ENCODE measurements at regions of chr1 and their contacts with region 1.

Region 1: GRCh38 chr1:116570358-116571200 is at the start of gene CD58:
- DNase-seq: peak; percentile 93
- H3K4me3 ChIP-seq: peak within 1 kb of the TSS; percentile 73 to 95 (median 79)
- H3K27ac ChIP-seq: peak within 1 kb of the TSS; percentile 95 to 99 (median 96)
- H3K4me1 ChIP-seq: peaks cover 0 to 32% (median 21%) of the 10 kb centered on the region in 4 donors
- H3K27me3 ChIP-seq: no peaks in the 10 kb centered on the region
- CTCF ChIP-seq: peak in 3 of 4 experiments; percentile 50 to 71 (median 53)
- EP300 ChIP-seq: no peak
- POLR2A ChIP-seq: peak; percentile 26 to 58
- total RNA-seq, gene CD58: 17.5 to 36.6 (median 28.0) TPM

Region 2: GRCh38 chr1:116377541-116378529 is 192.7 kb before region 1 on chr1:
- intact Hi-C with region 1: loop called (anchors 5 kb)
- DNase-seq: peak; percentile 90
- H3K4me3 ChIP-seq: peak overlapping the region in 3 of 4 donors; percentile 2 to 17 (median 13)
- H3K27ac ChIP-seq: peak overlapping the region; percentile 80 to 98 (median 95)
- H3K4me1 ChIP-seq: peaks cover 0 to 80% (median 66%) of the 10 kb centered on the region in 4 donors
- H3K27me3 ChIP-seq: no peaks in the 10 kb centered on the region
- CTCF ChIP-seq: no peak
- EP300 ChIP-seq: peak in 1 of 4 donors; percentile 29
- POLR2A ChIP-seq: no peak

Region 3: DNA sequence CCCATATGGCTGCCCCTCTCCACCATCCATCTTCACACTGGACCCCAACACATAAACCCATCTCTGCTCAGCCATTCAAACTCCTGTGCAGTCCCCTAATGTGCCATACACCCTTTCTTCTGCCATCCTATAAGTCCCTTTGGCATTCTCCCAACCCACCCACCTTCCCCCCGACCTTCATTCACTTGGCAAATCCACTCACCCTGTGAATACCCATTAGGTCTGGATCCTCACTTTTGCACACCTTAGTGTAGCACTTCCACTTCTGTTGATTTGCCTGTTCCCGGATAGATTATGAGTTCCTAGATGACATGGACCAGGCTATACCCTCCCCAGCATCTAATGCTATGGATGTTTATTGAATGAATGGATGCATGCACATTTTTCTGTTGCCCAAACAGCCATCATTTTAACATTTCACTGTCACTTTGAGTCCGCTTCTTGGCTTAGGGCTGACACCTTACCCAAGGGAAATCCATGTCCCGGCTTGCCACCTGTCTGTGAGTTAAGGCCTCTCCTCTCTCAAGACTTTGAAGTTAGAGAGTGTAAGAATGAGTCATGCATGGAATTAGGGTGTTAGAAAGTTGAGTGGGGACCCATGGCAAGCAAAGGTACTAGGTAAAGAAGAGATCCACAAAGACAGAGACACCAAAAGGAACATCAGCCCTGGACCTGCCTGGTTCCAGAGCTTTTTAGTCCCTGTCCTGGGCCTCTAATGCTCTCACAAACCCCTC is 162.6 kb before region 1 on chr1:
- intact Hi-C with region 1: no loop called
- DNase-seq: no peak
- H3K4me3 ChIP-seq: no peak overlapping the region
- H3K27ac ChIP-seq: no peak overlapping the region
- H3K4me1 ChIP-seq: no peaks in the 10 kb centered on the region
- H3K27me3 ChIP-seq: no peaks in the 10 kb centered on the region
- CTCF ChIP-seq: no peak
- EP300 ChIP-seq: no peak
- POLR2A ChIP-seq: no peak

Region 4: GRCh38 chr1:116418091-116418830 is 152.3 kb before region 1 on chr1:
- intact Hi-C with region 1: loop called (anchors 5 kb)
- DNase-seq: peak; percentile 92
- H3K4me3 ChIP-seq: peak overlapping the region; percentile 58 to 76 (median 65)
- H3K27ac ChIP-seq: peak overlapping the region; percentile 69 to 78 (median 74)
- H3K4me1 ChIP-seq: peaks cover 0 to 17% (median 12%) of the 10 kb centered on the region in 4 donors
- H3K27me3 ChIP-seq: no peaks in the 10 kb centered on the region
- CTCF ChIP-seq: no peak
- EP300 ChIP-seq: no peak
- POLR2A ChIP-seq: peak; percentile 18 to 30

Region 5: DNA sequence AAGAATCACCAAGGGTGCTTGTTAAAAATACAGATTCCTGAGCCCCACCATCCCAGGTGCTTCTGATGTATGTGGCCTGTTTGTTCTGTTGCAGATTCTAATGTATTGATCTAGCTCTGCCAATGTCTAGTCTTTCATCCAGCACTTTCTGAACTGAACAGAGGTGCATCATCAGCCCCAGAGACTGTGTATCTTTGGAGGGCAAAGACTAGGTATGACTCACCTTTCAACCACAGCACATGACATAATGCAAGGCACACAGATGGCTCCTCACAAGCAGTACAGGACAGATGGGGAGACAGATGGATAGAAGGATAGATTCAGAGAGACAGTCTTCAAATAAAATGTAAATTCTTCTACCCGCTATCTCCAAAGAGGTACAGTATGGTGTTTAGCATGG is 32.0 kb before region 1 on chr1:
- intact Hi-C with region 1: no loop called
- DNase-seq: no peak
- H3K4me3 ChIP-seq: no peak overlapping the region
- H3K27ac ChIP-seq: no peak overlapping the region
- H3K4me1 ChIP-seq: no peaks in the 10 kb centered on the region
- H3K27me3 ChIP-seq: no peaks in the 10 kb centered on the region
- CTCF ChIP-seq: no peak
- EP300 ChIP-seq: no peak
- POLR2A ChIP-seq: no peak

Region 6: GRCh38 chr1:116667575-116668105 is 97.1 kb after region 1 on chr1 and contains the start of gene IGSF3:
- intact Hi-C with region 1: loop called (anchors 2 kb)
- DNase-seq: peak; percentile 80
- H3K4me3 ChIP-seq: peak within 1 kb of the TSS; percentile 46 to 66 (median 56)
- H3K27ac ChIP-seq: peak within 1 kb of the TSS in 3 of 4 donors; percentile 3 to 21 (median 8)
- H3K4me1 ChIP-seq: peaks cover 0 to 20% (median 15%) of the 10 kb centered on the region in 4 donors
- H3K27me3 ChIP-seq: no peaks in the 10 kb centered on the region
- CTCF ChIP-seq: no peak
- EP300 ChIP-seq: no peak
- POLR2A ChIP-seq: no peak
- total RNA-seq, gene IGSF3: 3.9 to 7.2 (median 6.2) TPM